ENCODE measurements at regions of chr3 and their contacts with region 1.

Region 1: GRCh38 chr3:56251343-56251945 is 216.8 kb downstream of the ERC2 start:
- DNase-seq: peak; percentile 51
- ATAC-seq: peak; percentile 79
- H3K4me3 ChIP-seq: no peak overlapping the region
- H3K27ac ChIP-seq: no peak overlapping the region
- H3K4me1 ChIP-seq: no peaks in the 10 kb centered on the region
- H3K27me3 ChIP-seq: peaks cover 2% of the 10 kb centered on the region; the same call in 1 of the 2 replicates
- CTCF ChIP-seq: peak; percentile 79
- POLR2A ChIP-seq: no peak
- RAD21 ChIP-seq: peak; percentile 79

Region 2: DNA sequence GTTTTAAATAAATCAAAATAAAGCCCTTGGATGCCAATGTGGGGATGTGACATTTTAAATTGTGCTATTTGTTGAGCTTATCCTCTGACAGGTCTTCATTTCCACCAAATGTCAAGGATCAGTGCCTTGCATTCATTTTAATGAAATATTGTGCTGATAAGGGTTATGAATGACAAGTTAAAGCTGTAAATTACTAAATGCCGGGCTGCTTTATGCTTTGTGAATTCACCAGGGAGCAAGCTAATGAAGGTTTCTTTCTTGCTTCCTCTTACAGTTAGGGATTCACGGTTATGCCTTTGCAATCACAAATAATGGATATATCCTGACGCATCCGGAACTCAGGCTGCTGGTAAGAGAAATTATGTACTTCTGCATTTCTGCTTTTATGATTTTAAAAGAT is 1405.3 kb before region 1 on chr3:
- CTCF ChIA-PET with region 1: no interaction called
- POLR2A ChIA-PET with region 1: no interaction called
- dilution Hi-C with region 1: no loop called
- in situ Hi-C with region 1: loop called (anchors 5 kb)
- intact Hi-C with region 1: no loop called
- DNase-seq: no peak
- ATAC-seq: no peak
- H3K4me3 ChIP-seq: no peak overlapping the region
- H3K27ac ChIP-seq: no peak overlapping the region
- H3K4me1 ChIP-seq: no peaks in the 10 kb centered on the region
- H3K27me3 ChIP-seq: peaks cover 25% of the 10 kb centered on the region
- CTCF ChIP-seq: no peak
- POLR2A ChIP-seq: no peak
- RAD21 ChIP-seq: no peak

Region 3: GRCh38 chr3:54853573-54854404 is 1397.7 kb before region 1 on chr3:
- CTCF ChIA-PET with region 1: no interaction called
- POLR2A ChIA-PET with region 1: no interaction called
- dilution Hi-C with region 1: no loop called
- in situ Hi-C with region 1: loop called (anchors 5 kb)
- intact Hi-C with region 1: loop called (anchors 2 kb)
- DNase-seq: peak; percentile 74
- ATAC-seq: peak; percentile 98
- H3K4me3 ChIP-seq: no peak overlapping the region
- H3K27ac ChIP-seq: peak overlapping the region; percentile 79
- H3K4me1 ChIP-seq: peaks cover 8% of the 10 kb centered on the region
- H3K27me3 ChIP-seq: peaks cover 5% of the 10 kb centered on the region; the same call in 1 of the 2 replicates
- CTCF ChIP-seq: peak; percentile 83
- POLR2A ChIP-seq: no peak
- RAD21 ChIP-seq: peak; percentile 93

Measured in IMR-90 (cell line).